ENCODE measurements at regions of chr11 and their contacts with region 1.

Region 1: DNA sequence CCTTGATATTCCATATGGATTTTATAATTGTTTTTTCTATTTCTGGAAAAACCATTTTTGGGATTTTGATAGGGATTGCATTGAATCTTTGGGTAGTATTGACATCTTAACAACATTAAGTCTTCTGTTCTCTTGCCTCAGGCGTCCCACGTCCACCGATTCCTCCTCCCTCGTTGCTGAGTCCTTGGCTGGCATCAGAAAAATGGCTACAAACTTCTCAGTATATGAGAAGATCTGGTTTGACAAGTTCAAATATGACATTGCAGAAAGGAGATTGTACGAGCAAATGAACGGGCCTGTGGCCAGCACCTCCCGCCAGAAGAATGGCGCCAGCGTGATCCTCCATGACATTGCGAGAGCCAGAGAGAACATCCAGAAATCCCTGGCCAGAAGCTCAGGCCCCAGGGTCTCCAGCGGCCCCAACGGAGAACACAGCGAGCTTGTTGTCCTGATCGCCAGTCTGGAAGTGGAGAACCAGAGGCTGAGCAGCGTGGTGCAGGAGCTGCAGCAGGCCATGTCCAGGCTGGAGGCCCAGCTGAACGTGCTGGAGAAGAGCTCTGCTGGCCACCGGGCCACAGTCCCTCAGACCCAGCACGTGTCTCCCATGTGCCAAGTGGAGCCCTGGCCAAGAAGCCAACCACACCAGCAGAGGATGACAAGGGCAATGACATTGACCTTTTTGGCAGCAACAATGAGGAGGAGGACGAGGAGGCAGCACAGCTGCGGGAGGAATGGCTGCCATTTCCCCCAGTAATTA is 20.7 kb upstream of the SCGB1D1 start:
- DNase-seq: no peak
- ATAC-seq: no peak
- H3K4me3 ChIP-seq: no peak overlapping the region
- H3K27ac ChIP-seq: no peak overlapping the region
- H3K4me1 ChIP-seq: no peaks in the 10 kb centered on the region; the same call in 2 of the 3 replicates
- CTCF ChIP-seq: no peak
- EP300 ChIP-seq: no peak
- POLR2A ChIP-seq: no peak
- RAD21 ChIP-seq: no peak

Region 2: GRCh38 chr11:62048065-62048464 is 121.2 kb before region 1 on chr11:
- CTCF ChIA-PET with region 1: no interaction called
- POLR2A ChIA-PET with region 1: no interaction called
- DNase-seq: no peak
- ATAC-seq: no peak
- H3K4me3 ChIP-seq: no peak overlapping the region
- H3K27ac ChIP-seq: peak overlapping the region; percentile 50 to 69; a peak in 5 of 6 replicates
- H3K4me1 ChIP-seq: peaks cover 45% of the 10 kb centered on the region
- CTCF ChIP-seq: no peak
- EP300 ChIP-seq: no peak
- POLR2A ChIP-seq: no peak
- RAD21 ChIP-seq: no peak

Region 3: DNA sequence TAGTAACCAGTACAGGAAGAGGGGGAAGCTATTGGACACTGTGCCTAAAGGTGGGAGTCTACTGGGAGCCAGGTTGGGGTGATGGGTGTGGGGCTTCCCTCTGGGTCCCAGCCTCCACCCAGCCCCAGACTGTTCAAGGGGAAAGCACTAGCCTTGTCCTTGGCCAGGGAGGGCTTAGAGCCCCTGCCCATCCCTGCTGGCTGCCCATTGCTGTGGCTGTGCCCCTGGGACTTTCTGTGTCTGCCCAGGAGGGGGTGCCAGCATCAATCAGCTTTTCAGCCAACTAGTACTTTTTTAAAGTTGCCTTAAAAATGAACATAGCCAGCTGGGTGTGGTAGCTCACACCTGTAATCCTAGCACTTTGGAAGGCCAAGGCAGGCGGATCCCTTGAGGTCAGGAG is 25.5 kb before region 1 on chr11:
- CTCF ChIA-PET with region 1: interaction called, 13 read pairs
- POLR2A ChIA-PET with region 1: no interaction called
- DNase-seq: no peak
- ATAC-seq: peak in 1 of 2 experiments; percentile 28; a peak in 2 of 6 replicates
- H3K4me3 ChIP-seq: no peak overlapping the region
- H3K27ac ChIP-seq: no peak overlapping the region
- H3K4me1 ChIP-seq: no peaks in the 10 kb centered on the region
- CTCF ChIP-seq: no peak
- EP300 ChIP-seq: no peak
- POLR2A ChIP-seq: no peak
- RAD21 ChIP-seq: no peak

Region 4: GRCh38 chr11:62150907-62151736 is 18.1 kb before region 1 on chr11:
- CTCF ChIA-PET with region 1: interaction called, 13 read pairs
- POLR2A ChIA-PET with region 1: no interaction called
- DNase-seq: no peak
- ATAC-seq: no peak; a peak in 1 of 6 replicates
- H3K4me3 ChIP-seq: no peak overlapping the region
- H3K27ac ChIP-seq: no peak overlapping the region
- H3K4me1 ChIP-seq: no peaks in the 10 kb centered on the region
- CTCF ChIP-seq: no peak
- EP300 ChIP-seq: no peak
- POLR2A ChIP-seq: no peak
- RAD21 ChIP-seq: no peak

Region 5: GRCh38 chr11:62157603-62158002 is 11.7 kb before region 1 on chr11:
- CTCF ChIA-PET with region 1: interaction called, 14 read pairs
- POLR2A ChIA-PET with region 1: no interaction called
- DNase-seq: no peak
- ATAC-seq: no peak; a peak in 1 of 6 replicates
- H3K4me3 ChIP-seq: no peak overlapping the region
- H3K27ac ChIP-seq: no peak overlapping the region
- H3K4me1 ChIP-seq: no peaks in the 10 kb centered on the region
- CTCF ChIP-seq: no peak
- EP300 ChIP-seq: no peak
- POLR2A ChIP-seq: no peak
- RAD21 ChIP-seq: no peak

Region 6: GRCh38 chr11:62208785-62209144 is 39.5 kb after region 1 on chr11:
- CTCF ChIA-PET with region 1: interaction called, 12 read pairs
- POLR2A ChIA-PET with region 1: no interaction called
- DNase-seq: no peak
- ATAC-seq: peak in 1 of 2 experiments; percentile 35; a peak in 3 of 6 replicates
- H3K4me3 ChIP-seq: no peak overlapping the region
- H3K27ac ChIP-seq: no peak overlapping the region
- H3K4me1 ChIP-seq: no peaks in the 10 kb centered on the region
- CTCF ChIP-seq: no peak
- EP300 ChIP-seq: no peak
- POLR2A ChIP-seq: no peak
- RAD21 ChIP-seq: no peak

Region 7: GRCh38 chr11:62245271-62245753 is 76.0 kb after region 1 on chr11:
- CTCF ChIA-PET with region 1: no interaction called
- POLR2A ChIA-PET with region 1: no interaction called
- DNase-seq: peak; percentile 24 to 29
- ATAC-seq: peak; percentile 75 to 80; a peak in 5 of 6 replicates
- H3K4me3 ChIP-seq: no peak overlapping the region
- H3K27ac ChIP-seq: no peak overlapping the region
- H3K4me1 ChIP-seq: peaks cover 8% of the 10 kb centered on the region; the same call in 2 of the 3 replicates
- CTCF ChIP-seq: peak; percentile 24; the same call in 2 of the 3 replicates
- EP300 ChIP-seq: no peak
- POLR2A ChIP-seq: no peak
- RAD21 ChIP-seq: peak; percentile 21 to 49; a peak in 3 of 5 replicates

Measured in A549 (cell line).